Activated T-helper 1 cell treated with anti-CD3 and anti-CD28 coated beads, Interleukin-12 subunit alpha, Interleukin-12 subunit beta, Interleukin-2, Interleukin-4 antibody, amounts not matched to agents 30 ng/mL and 10 ng/mL and 1 ng/mL, durations not matched to agents 14 hours and 24 hours and 36 hours (primary cell): ENCODE measurements at regions of chr9 and their contacts with region 1.

Region 1: DNA sequence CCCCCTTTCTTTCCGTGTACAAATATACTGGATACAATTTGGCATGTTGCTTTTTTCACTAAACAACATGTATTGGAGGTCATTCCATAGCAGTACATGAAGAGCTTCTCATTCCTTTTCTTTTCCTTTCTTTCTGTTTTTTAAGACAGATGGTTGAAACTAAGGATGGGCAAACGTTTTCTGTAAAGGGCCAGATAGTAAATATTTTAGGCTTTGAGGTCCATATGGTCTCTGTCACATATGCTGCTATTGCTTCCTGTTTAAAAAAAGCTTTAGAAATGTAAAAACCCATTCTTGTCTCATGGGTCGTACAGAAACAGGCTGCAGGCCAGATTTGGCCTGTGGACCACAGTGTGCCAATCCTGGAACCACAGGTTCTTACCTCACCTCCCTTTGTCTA is 160.1 kb downstream of the ACER2 start:
- DNase-seq: no peak
- H3K4me3 Mint-ChIP-seq: no peak overlapping the region
- H3K27ac Mint-ChIP-seq: no peak overlapping the region
- H3K4me1 Mint-ChIP-seq: no peaks in the 10 kb centered on the region
- H3K27me3 Mint-ChIP-seq: peaks cover 3% of the 10 kb centered on the region

Region 2: DNA sequence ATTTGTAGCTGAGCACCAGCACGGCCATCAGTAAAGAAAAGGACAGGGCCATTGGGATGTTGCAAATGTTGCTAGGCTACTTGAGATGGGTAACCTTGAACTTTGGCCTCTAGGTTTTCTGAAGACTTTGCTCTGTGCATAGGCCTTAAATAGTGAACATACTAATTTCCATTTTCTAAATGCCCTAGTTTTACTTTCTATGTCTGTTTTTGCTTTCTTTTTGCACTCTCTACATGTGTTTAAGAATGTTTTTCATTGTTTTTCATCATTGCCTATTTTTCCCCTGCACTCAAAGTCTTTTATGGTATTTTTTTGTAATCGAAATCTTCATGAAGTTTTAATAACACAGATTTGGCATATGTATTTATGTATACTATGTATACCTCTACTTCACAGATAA is 1659.2 kb after region 1 on chr9 and contains the start of gene IFNA17:
- intact Hi-C with region 1: loop called (anchors 5 kb)
- DNase-seq: no peak
- H3K4me3 Mint-ChIP-seq: no peak within 1 kb of the TSS
- H3K27ac Mint-ChIP-seq: no peak within 1 kb of the TSS
- H3K4me1 Mint-ChIP-seq: no peaks in the 10 kb centered on the region
- H3K27me3 Mint-ChIP-seq: peaks cover 8% of the 10 kb centered on the region
- total RNA-seq, gene IFNA17: not detected in 2 replicates